ENCODE measurements at regions of chr7 and their contacts with region 1.

Region 1: GRCh38 chr7:149811221-149811620 is 27.0 kb upstream of the ZNF862 start:
- DNase-seq: no peak
- H3K4me3 ChIP-seq: no peak overlapping the region
- H3K27ac ChIP-seq: no peak overlapping the region
- H3K4me1 ChIP-seq: peaks cover 0 to 4% of the 10 kb centered on the region in 2 experiments; a peak in 1 of 4 replicates
- H3K27me3 ChIP-seq: peaks cover 8% of the 10 kb centered on the region; the same call in 1 of the 2 replicates
- CTCF ChIP-seq: peak; percentile 46
- EP300 ChIP-seq: no peak
- RAD21 ChIP-seq: no peak

Region 2: DNA sequence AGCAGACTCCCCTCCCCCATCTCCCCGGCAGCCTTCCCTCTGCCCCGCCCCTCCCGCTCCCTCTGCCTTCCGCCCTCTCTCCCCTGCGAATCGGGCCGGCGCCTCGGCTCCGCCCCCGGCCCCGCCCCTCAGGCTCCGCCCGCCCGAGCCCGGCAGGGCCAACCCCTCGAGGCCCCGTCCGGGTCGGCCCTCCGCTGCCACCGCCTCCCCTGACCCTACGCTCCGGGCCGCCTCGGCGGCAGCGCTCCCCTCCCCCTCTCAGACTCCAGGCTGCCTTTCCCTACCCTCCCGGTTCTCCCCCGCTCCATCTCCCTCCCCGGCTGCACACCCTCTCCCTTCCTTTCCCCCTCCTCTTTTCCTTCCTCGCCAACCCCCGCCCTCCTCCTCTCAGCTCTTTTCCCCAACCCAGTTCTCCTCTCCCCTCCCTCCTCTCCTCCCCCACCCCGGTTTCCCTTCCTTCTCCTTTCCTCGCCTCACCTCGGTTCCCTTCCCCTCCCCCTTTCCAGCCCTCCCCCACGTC is 39.4 kb before region 1 on chr7:
- CTCF ChIA-PET with region 1: interaction called, 10 read pairs
- POLR2A ChIA-PET with region 1: no interaction called
- DNase-seq: peak; percentile 99
- H3K4me3 ChIP-seq: peak overlapping the region; percentile 61 to 65
- H3K27ac ChIP-seq: peak overlapping the region in 1 of 2 experiments; percentile 74; a peak in 1 of 4 replicates
- H3K4me1 ChIP-seq: peaks cover 4 to 33% of the 10 kb centered on the region in 2 experiments; a peak in 1 of 4 replicates
- H3K27me3 ChIP-seq: peaks cover 21% of the 10 kb centered on the region
- CTCF ChIP-seq: no peak
- EP300 ChIP-seq: no peak
- RAD21 ChIP-seq: no peak

Region 3: GRCh38 chr7:149799397-149800171 is 11.6 kb before region 1 on chr7:
- CTCF ChIA-PET with region 1: interaction called, 189 read pairs
- POLR2A ChIA-PET with region 1: interaction called, 3 read pairs
- DNase-seq: peak; percentile 75
- H3K4me3 ChIP-seq: no peak overlapping the region
- H3K27ac ChIP-seq: no peak overlapping the region
- H3K4me1 ChIP-seq: peaks cover 0 to 4% of the 10 kb centered on the region in 2 experiments; a peak in 1 of 4 replicates
- H3K27me3 ChIP-seq: peaks cover 5% of the 10 kb centered on the region; the same call in 1 of the 2 replicates
- CTCF ChIP-seq: peak; percentile 49
- EP300 ChIP-seq: no peak
- RAD21 ChIP-seq: peak; percentile 57

Region 4: GRCh38 chr7:149832332-149833041 is 21.3 kb after region 1 on chr7:
- CTCF ChIA-PET with region 1: interaction called, 16 read pairs
- POLR2A ChIA-PET with region 1: no interaction called
- DNase-seq: no peak
- H3K4me3 ChIP-seq: no peak overlapping the region
- H3K27ac ChIP-seq: no peak overlapping the region
- H3K4me1 ChIP-seq: peaks cover 0 to 2% of the 10 kb centered on the region in 2 experiments; a peak in 1 of 4 replicates
- H3K27me3 ChIP-seq: peaks cover 42% of the 10 kb centered on the region
- CTCF ChIP-seq: no peak
- EP300 ChIP-seq: no peak
- RAD21 ChIP-seq: no peak

Region 5: GRCh38 chr7:149854611-149855360 is 43.6 kb after region 1 on chr7:
- CTCF ChIA-PET with region 1: interaction called, 15 read pairs
- POLR2A ChIA-PET with region 1: no interaction called
- DNase-seq: peak; percentile 81
- H3K4me3 ChIP-seq: no peak overlapping the region
- H3K27ac ChIP-seq: peak overlapping the region; percentile 36; a peak in 3 of 4 replicates
- H3K4me1 ChIP-seq: peaks cover 19 to 21% of the 10 kb centered on the region in 2 experiments
- H3K27me3 ChIP-seq: no peaks in the 10 kb centered on the region
- CTCF ChIP-seq: no peak
- EP300 ChIP-seq: no peak
- RAD21 ChIP-seq: no peak; the same call in 1 of the 2 replicates

Region 6: GRCh38 chr7:149883452-149883861 is 72.2 kb after region 1 on chr7:
- CTCF ChIA-PET with region 1: interaction called, 17 read pairs
- POLR2A ChIA-PET with region 1: no interaction called
- DNase-seq: peak; percentile 82
- H3K4me3 ChIP-seq: no peak overlapping the region; a peak in 1 of 4 replicates
- H3K27ac ChIP-seq: no peak overlapping the region
- H3K4me1 ChIP-seq: no peaks in the 10 kb centered on the region; a peak in 1 of 4 replicates
- H3K27me3 ChIP-seq: no peaks in the 10 kb centered on the region
- CTCF ChIP-seq: peak; percentile 80
- EP300 ChIP-seq: no peak
- RAD21 ChIP-seq: peak; percentile 93